ENCODE measurements at regions of chr12 and their contacts with region 1.

Region 1: GRCh38 chr12:107884769-107885694 is 110.5 kb downstream of the ASCL4 start:
- DNase-seq: peak; percentile 71
- ATAC-seq: peak; percentile 71
- H3K4me3 Mint-ChIP-seq: no peak overlapping the region
- H3K27ac Mint-ChIP-seq: no peak overlapping the region
- H3K4me1 Mint-ChIP-seq: peaks cover 2% of the 10 kb centered on the region
- H3K27me3 Mint-ChIP-seq: peaks cover 21% of the 10 kb centered on the region

Region 2: GRCh38 chr12:107679336-107679735 is 205.7 kb before region 1 on chr12:
- CTCF ChIA-PET with region 1: interaction called, 12 read pairs
- POLR2A ChIA-PET with region 1: no interaction called
- DNase-seq: no peak
- ATAC-seq: no peak
- H3K4me3 Mint-ChIP-seq: no peak overlapping the region
- H3K27ac Mint-ChIP-seq: no peak overlapping the region
- H3K4me1 Mint-ChIP-seq: peaks cover 1% of the 10 kb centered on the region
- H3K27me3 Mint-ChIP-seq: peaks cover 18% of the 10 kb centered on the region

Region 3: DNA sequence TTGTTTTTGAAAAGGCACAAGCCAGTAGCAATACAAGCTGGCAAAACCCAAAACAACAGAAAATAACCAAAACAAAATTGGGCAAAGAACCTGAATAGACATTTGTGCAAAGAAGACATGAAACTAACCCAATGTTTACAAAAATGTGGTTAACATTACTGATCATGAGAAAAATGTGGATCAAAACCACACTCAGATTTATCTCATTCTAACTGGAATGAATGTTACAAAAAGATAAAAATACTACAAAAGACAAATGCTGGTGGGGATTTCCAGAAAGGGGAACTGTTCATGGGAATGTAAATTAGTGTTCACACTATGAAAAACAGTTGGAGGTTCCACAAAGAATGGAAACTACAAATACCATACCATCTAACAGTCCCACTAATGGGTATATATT is 83.9 kb before region 1 on chr12:
- CTCF ChIA-PET with region 1: no interaction called
- POLR2A ChIA-PET with region 1: no interaction called
- DNase-seq: no peak
- ATAC-seq: no peak
- H3K4me3 Mint-ChIP-seq: no peak overlapping the region
- H3K27ac Mint-ChIP-seq: no peak overlapping the region
- H3K4me1 Mint-ChIP-seq: no peaks in the 10 kb centered on the region
- H3K27me3 Mint-ChIP-seq: peaks cover 16% of the 10 kb centered on the region